ENCODE measurements at regions of chr6 and their contacts with region 1.

Region 1: GRCh38 chr6:39302669-39303424 is 11.4 kb downstream of the KCNK17 start:
- DNase-seq: peak; percentile 76 to 84
- ATAC-seq: peak; percentile 76 to 90 (median 87)
- H3K4me3 ChIP-seq: peak overlapping the region in 1 of 10 donors; percentile 14
- H3K27ac ChIP-seq: no peak overlapping the region
- H3K4me1 ChIP-seq: peaks cover 0 to 5% (median 0%) of the 10 kb centered on the region in 9 donors
- H3K27me3 ChIP-seq: peaks cover 0 to 32% (median 7%) of the 10 kb centered on the region in 7 donors
- CTCF ChIP-seq: peak; percentile 65 to 91 (median 86)

Region 2: GRCh38 chr6:38871741-38872568 is 430.9 kb before region 1 on chr6:
- intact Hi-C with region 1: loop called in 6 of 10 experiments (anchors 2 to 5 kb)
- DNase-seq: peak in 1 of 2 donors; percentile 17
- ATAC-seq: no peak
- H3K4me3 ChIP-seq: no peak overlapping the region
- H3K27ac ChIP-seq: no peak overlapping the region
- H3K4me1 ChIP-seq: peaks cover 0 to 9% (median 0%) of the 10 kb centered on the region in 9 donors
- H3K27me3 ChIP-seq: peaks cover 0 to 42% (median 6%) of the 10 kb centered on the region in 7 donors
- CTCF ChIP-seq: peak; percentile 57 to 90 (median 76)

Region 3: GRCh38 chr6:38973178-38974054 is 329.4 kb before region 1 on chr6:
- intact Hi-C with region 1: loop called in 9 of 10 experiments (anchors 2 to 5 kb)
- DNase-seq: peak in 1 of 2 donors; percentile 14
- ATAC-seq: peak in 7 of 8 donors; percentile 38 to 80 (median 64)
- H3K4me3 ChIP-seq: no peak overlapping the region
- H3K27ac ChIP-seq: no peak overlapping the region
- H3K4me1 ChIP-seq: peaks cover 0 to 16% (median 0%) of the 10 kb centered on the region in 9 donors
- H3K27me3 ChIP-seq: peaks cover 0 to 15% (median 7%) of the 10 kb centered on the region in 7 donors
- CTCF ChIP-seq: peak; percentile 23 to 76 (median 59)

Region 4: GRCh38 chr6:39088331-39088730 is 214.5 kb before region 1 on chr6:
- intact Hi-C with region 1: loop called in 9 of 10 experiments (anchors 2 to 5 kb)
- DNase-seq: peak in 1 of 2 donors; percentile 55
- ATAC-seq: peak; percentile 80 to 94 (median 89)
- H3K4me3 ChIP-seq: no peak overlapping the region
- H3K27ac ChIP-seq: no peak overlapping the region
- H3K4me1 ChIP-seq: peaks cover 0 to 16% (median 12%) of the 10 kb centered on the region in 9 donors
- H3K27me3 ChIP-seq: peaks cover 0 to 37% (median 3%) of the 10 kb centered on the region in 7 donors
- CTCF ChIP-seq: peak in 7 of 9 donors; percentile 38 to 67 (median 61)

Region 5: DNA sequence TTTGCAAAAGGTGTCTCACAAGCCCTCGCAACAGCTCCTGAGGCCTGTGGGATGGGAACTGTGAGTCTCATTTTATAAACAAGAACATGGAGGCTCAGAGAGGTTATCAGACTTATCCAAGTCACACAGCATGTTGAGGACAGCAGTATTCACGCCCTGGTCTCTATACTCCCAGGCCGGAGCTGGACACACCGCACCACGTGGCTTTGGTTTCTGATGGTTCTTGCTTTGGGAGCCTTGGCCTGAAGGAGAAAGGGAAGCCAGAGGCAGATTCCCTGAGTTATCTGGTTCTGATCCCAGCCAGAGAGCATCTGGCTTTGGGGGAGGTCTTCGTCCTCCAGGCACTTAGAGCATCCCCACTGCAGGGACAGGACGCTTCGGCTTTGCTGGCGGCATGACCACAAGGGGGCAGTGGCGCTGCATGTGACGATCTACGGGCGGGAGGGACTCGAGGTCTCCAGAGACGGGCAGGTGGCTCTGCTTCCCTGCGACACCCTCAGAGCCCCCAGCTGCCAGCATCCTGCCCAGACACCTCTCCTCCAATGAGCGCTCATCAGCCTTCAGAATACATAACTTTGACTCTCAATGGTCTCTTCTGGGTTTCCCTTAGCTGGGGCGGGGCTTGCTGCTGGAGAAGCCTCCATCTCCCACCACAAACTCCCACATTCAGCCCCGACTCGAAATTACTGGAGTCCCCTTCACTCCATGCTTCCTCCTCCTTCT is 136.5 kb before region 1 on chr6:
- intact Hi-C with region 1: loop called (anchors 2 to 5 kb)
- DNase-seq: peak; percentile 58 to 81
- ATAC-seq: peak; percentile 58 to 87 (median 76)
- H3K4me3 ChIP-seq: no peak overlapping the region
- H3K27ac ChIP-seq: no peak overlapping the region
- H3K4me1 ChIP-seq: peaks cover 0 to 4% (median 0%) of the 10 kb centered on the region in 9 donors
- H3K27me3 ChIP-seq: peaks cover 0 to 29% (median 10%) of the 10 kb centered on the region in 7 donors
- CTCF ChIP-seq: peak; percentile 53 to 95 (median 86)